GM12878 (cell line): ENCODE measurements at regions of chr11 and their contacts with region 1.

Region 1: GRCh38 chr11:110886288-110886970 is 174.2 kb upstream of the ARHGAP20 start:
- DNase-seq: no peak
- ATAC-seq: no peak
- H3K4me3 ChIP-seq: no peak overlapping the region
- H3K27ac ChIP-seq: no peak overlapping the region
- H3K4me1 ChIP-seq: no peaks in the 10 kb centered on the region
- H3K27me3 ChIP-seq: no peaks in the 10 kb centered on the region; a peak in 1 of 4 replicates
- CTCF ChIP-seq: no peak
- EP300 ChIP-seq: no peak
- POLR2A ChIP-seq: no peak
- RAD21 ChIP-seq: no peak

Region 2: GRCh38 chr11:110939471-110939870 is 53.0 kb after region 1 on chr11:
- CTCF ChIA-PET with region 1: no interaction called
- POLR2A ChIA-PET with region 1: no interaction called
- RAD21 ChIA-PET with region 1: no interaction called
- SMC1A ChIA-PET with region 1: no interaction called
- in situ Hi-C with region 1: no loop called
- intact Hi-C with region 1: loop called (anchors 5 kb)
- DNase-seq: no peak
- ATAC-seq: no peak
- H3K4me3 ChIP-seq: no peak overlapping the region
- H3K27ac ChIP-seq: no peak overlapping the region
- H3K4me1 ChIP-seq: no peaks in the 10 kb centered on the region
- H3K27me3 ChIP-seq: no peaks in the 10 kb centered on the region; a peak in 1 of 4 replicates
- CTCF ChIP-seq: no peak
- EP300 ChIP-seq: no peak
- POLR2A ChIP-seq: no peak
- RAD21 ChIP-seq: no peak

Region 3: GRCh38 chr11:111417011-111417765 is 530.8 kb after region 1 on chr11:
- CTCF ChIA-PET with region 1: no interaction called
- POLR2A ChIA-PET with region 1: no interaction called
- RAD21 ChIA-PET with region 1: no interaction called
- SMC1A ChIA-PET with region 1: no interaction called
- in situ Hi-C with region 1: no loop called
- intact Hi-C with region 1: no loop called
- DNase-seq: peak; percentile 96
- ATAC-seq: peak; percentile 81
- H3K4me3 ChIP-seq: peak overlapping the region; percentile 29; the same call in 1 of the 2 replicates
- H3K27ac ChIP-seq: peak overlapping the region; percentile 98
- H3K4me1 ChIP-seq: peaks cover 81% of the 10 kb centered on the region
- H3K27me3 ChIP-seq: no peaks in the 10 kb centered on the region
- CTCF ChIP-seq: no peak
- EP300 ChIP-seq: peak; percentile 66 to 90; a peak in 3 of 4 replicates
- POLR2A ChIP-seq: peak; percentile 53; the same call in 1 of the 2 replicates
- RAD21 ChIP-seq: no peak